Activated T-helper 1 cell treated with anti-CD3 and anti-CD28 coated beads, Interleukin-12 subunit alpha, Interleukin-12 subunit beta, Interleukin-2, Interleukin-4 antibody, amounts not matched to agents 30 ng/mL and 10 ng/mL and 1 ng/mL, durations not matched to agents 14 hours and 24 hours and 36 hours (primary cell): ENCODE measurements at regions of chr7 and their contacts with region 1.

Region 1: DNA sequence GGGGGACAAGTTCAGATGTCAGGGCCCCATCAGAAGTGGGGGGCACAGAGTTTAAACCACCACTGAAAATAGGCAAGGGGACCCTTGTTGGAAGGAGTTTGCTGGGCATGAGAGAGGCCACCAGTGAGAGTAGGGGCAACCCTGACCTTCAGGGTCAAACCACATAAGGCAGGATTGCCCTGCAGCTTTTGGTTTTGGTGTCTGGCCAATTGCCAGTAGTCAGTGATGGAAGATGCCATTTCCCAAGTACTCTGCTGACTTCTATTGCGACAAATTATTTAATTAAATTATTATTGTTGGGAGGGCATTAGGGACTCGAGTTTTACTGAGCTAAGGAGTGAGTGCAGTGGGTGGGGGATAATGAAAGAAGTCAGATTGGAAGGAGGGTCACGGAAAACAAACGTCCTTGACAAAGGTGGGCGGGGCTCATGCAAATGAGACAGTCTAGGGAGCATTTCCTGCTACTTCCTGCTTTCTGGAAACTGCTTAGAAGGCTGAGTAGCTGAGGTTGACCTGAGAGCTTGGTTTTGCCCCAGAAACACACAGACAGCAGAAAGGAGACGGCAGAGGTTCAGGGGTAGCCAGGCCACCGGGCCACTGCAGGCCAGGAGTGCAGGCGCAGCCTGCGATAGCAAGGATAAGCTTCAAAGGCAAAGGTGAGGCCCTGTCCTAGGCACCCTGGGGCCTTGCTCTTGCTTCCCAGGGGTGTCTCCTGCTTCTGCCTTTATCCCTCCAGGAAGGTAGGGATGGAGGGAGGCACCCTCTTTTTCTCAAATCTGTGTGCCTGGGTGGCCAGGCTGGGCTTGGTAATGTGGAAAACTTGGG is 74.1 kb upstream of the ANLN start:
- DNase-seq: no peak
- H3K4me3 Mint-ChIP-seq: no peak overlapping the region
- H3K27ac Mint-ChIP-seq: no peak overlapping the region
- H3K4me1 Mint-ChIP-seq: peaks cover 6% of the 10 kb centered on the region
- H3K27me3 Mint-ChIP-seq: peaks cover 3% of the 10 kb centered on the region

Region 2: DNA sequence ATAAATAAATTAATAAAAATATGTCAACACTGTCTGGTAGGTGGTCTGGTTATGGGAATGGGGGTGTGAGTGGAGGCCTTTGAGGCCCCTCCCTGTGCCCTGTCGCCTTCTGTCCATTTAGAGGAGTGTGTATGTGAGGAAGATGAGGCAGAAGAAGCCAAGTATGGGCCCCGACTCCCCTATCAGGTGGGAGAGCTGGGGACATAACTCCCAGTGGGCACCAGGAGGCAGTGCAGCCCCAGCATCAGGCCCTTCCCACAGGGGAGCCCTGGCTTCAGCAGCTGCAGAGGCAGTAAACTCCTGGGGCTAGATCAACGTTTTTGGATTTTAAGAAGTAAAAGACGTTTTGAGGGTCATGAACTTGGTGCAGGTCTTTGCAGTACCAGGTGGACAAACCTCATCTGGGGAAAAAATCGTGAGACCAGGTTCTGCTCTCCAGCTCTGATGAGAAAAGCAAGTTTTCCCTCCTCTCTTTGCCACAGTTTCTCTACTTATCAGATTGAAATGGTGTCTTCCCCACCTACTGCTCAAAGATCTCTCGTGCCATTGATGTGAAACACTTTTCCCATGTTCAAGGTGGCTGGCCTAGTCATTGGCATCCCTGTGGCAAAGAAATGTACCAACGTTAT is 330.3 kb before region 1 on chr7:
- intact Hi-C with region 1: loop called (anchors 1 kb)
- DNase-seq: peak; percentile 54
- H3K4me3 Mint-ChIP-seq: no peak overlapping the region
- H3K27ac Mint-ChIP-seq: no peak overlapping the region
- H3K4me1 Mint-ChIP-seq: no peaks in the 10 kb centered on the region
- H3K27me3 Mint-ChIP-seq: peaks cover 3% of the 10 kb centered on the region

Region 3: GRCh38 chr7:36062154-36062815 is 253.2 kb before region 1 on chr7:
- intact Hi-C with region 1: no loop called
- DNase-seq: no peak
- H3K4me3 Mint-ChIP-seq: no peak overlapping the region
- H3K27ac Mint-ChIP-seq: no peak overlapping the region
- H3K4me1 Mint-ChIP-seq: no peaks in the 10 kb centered on the region
- H3K27me3 Mint-ChIP-seq: peaks cover 3% of the 10 kb centered on the region